ENCODE measurements at regions of chr7 and their contacts with region 1.

Region 1: GRCh38 chr7:139060695-139061237 is 24.9 kb upstream of the ZC3HAV1L start:
- DNase-seq: no peak
- ATAC-seq: no peak
- H3K4me3 Mint-ChIP-seq: no peak overlapping the region
- H3K27ac Mint-ChIP-seq: peak overlapping the region; percentile 70
- H3K4me1 Mint-ChIP-seq: peaks cover 59% of the 10 kb centered on the region
- H3K27me3 Mint-ChIP-seq: no peaks in the 10 kb centered on the region

Region 2: DNA sequence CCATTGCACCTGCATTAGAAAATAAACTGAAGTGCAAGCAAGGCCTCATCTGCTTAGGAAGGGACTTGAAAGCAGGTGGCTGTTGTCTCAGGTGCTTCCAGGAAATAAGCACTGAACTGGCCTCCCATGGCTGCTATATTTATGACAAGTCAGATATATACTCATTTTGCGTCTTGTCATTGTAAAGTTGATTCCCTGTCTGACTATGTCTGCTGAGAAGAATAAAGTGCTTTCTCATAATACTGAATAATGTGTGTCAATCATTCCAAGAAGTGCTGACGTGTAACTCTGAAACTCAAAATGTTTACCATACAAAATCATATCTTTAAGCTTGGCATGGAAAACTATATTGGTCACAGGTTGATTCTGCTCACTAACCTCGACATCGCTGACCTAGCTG is 314.7 kb before region 1 on chr7:
- CTCF ChIA-PET with region 1: no interaction called
- DNase-seq: peak; percentile 56
- ATAC-seq: peak; percentile 83
- H3K4me3 Mint-ChIP-seq: no peak overlapping the region
- H3K27ac Mint-ChIP-seq: peak overlapping the region; percentile 29
- H3K4me1 Mint-ChIP-seq: peaks cover 39% of the 10 kb centered on the region
- H3K27me3 Mint-ChIP-seq: no peaks in the 10 kb centered on the region

Region 3: GRCh38 chr7:139049936-139050335 is 10.8 kb before region 1 on chr7:
- CTCF ChIA-PET with region 1: interaction called, 14 read pairs
- DNase-seq: no peak
- ATAC-seq: no peak
- H3K4me3 Mint-ChIP-seq: no peak overlapping the region
- H3K27ac Mint-ChIP-seq: peak overlapping the region; percentile 50
- H3K4me1 Mint-ChIP-seq: peaks cover 74% of the 10 kb centered on the region
- H3K27me3 Mint-ChIP-seq: no peaks in the 10 kb centered on the region